ENCODE measurements at regions of chr18 and their contacts with region 1.

Region 1: GRCh38 chr18:76480913-76481312 is 14.1 kb downstream of the ZNF516 start:
- DNase-seq: no peak
- ATAC-seq: no peak
- H3K4me3 ChIP-seq: no peak overlapping the region
- H3K27ac ChIP-seq: no peak overlapping the region
- H3K4me1 ChIP-seq: peaks cover 0 to 48% (median 13%) of the 10 kb centered on the region in 12 donors
- H3K27me3 ChIP-seq: no peaks in the 10 kb centered on the region
- CTCF ChIP-seq: peak in 1 of 12 donors; percentile 3
- POLR2A ChIP-seq: no peak

Region 2: DNA sequence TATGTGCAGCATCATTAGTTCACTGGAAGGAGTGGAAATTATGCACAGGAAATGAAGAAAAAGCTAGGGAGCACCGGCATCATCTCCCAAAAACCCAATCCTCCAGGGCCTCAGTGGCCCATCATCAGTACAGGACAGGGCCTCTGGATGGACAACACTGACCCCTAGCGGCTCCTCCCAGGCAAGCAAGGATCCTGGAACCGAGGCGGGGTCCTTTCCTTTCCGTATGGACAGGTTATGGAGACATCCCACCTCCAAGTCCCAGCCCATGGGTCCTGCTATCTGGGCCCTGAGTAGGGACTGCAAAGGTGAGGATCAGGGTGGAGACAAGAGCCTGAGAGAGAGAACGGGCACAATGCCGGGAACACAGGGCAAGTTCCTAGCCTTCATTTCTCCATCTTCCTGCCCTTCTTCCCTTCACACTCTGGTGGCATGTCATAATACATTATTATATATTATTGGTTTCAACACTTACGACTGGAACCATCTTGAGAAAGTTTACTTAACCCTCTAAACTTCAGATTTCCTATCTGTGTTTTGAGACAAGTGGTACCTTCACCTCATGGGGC is 54.1 kb before region 1 on chr18:
- intact Hi-C with region 1: loop called in 1 of 10 experiments (anchors 10 kb)
- DNase-seq: no peak
- ATAC-seq: peak in 3 of 4 donors; percentile 47 to 70 (median 51)
- H3K4me3 ChIP-seq: no peak overlapping the region
- H3K27ac ChIP-seq: no peak overlapping the region
- H3K4me1 ChIP-seq: peaks cover 0 to 32% (median 15%) of the 10 kb centered on the region in 12 donors
- H3K27me3 ChIP-seq: no peaks in the 10 kb centered on the region
- CTCF ChIP-seq: peak; percentile 43 to 74 (median 56)
- POLR2A ChIP-seq: no peak

Region 3: GRCh38 chr18:76604935-76605240 is 124.0 kb after region 1 on chr18:
- intact Hi-C with region 1: no loop called
- DNase-seq: no peak
- ATAC-seq: no peak
- H3K4me3 ChIP-seq: no peak overlapping the region
- H3K27ac ChIP-seq: no peak overlapping the region
- H3K4me1 ChIP-seq: no peaks in the 10 kb centered on the region
- H3K27me3 ChIP-seq: peaks cover 0 to 4% (median 0%) of the 10 kb centered on the region in 9 donors
- CTCF ChIP-seq: no peak
- POLR2A ChIP-seq: no peak

Region 4: GRCh38 chr18:77530732-77531131 is 1049.8 kb after region 1 on chr18:
- intact Hi-C with region 1: no loop called
- DNase-seq: no peak
- ATAC-seq: no peak
- H3K4me3 ChIP-seq: no peak overlapping the region
- H3K27ac ChIP-seq: no peak overlapping the region
- H3K4me1 ChIP-seq: no peaks in the 10 kb centered on the region
- H3K27me3 ChIP-seq: no peaks in the 10 kb centered on the region
- CTCF ChIP-seq: no peak
- POLR2A ChIP-seq: no peak

Measured in heart left ventricle (tissue), 16 donors.